ENCODE measurements at regions of chr12 and their contacts with region 1.

Region 1: GRCh38 chr12:104215638-104216297 is at the start of gene TXNRD1:
- DNase-seq: peak; percentile 83 to 90
- H3K4me3 ChIP-seq: peak within 1 kb of the TSS; percentile 70 to 82
- H3K27ac ChIP-seq: peak within 1 kb of the TSS; percentile 97
- H3K4me1 ChIP-seq: peaks cover 0 to 40% (median 16%) of the 10 kb centered on the region in 4 donors
- H3K27me3 ChIP-seq: no peaks in the 10 kb centered on the region
- CTCF ChIP-seq: peak; percentile 85 to 93

Region 2: DNA sequence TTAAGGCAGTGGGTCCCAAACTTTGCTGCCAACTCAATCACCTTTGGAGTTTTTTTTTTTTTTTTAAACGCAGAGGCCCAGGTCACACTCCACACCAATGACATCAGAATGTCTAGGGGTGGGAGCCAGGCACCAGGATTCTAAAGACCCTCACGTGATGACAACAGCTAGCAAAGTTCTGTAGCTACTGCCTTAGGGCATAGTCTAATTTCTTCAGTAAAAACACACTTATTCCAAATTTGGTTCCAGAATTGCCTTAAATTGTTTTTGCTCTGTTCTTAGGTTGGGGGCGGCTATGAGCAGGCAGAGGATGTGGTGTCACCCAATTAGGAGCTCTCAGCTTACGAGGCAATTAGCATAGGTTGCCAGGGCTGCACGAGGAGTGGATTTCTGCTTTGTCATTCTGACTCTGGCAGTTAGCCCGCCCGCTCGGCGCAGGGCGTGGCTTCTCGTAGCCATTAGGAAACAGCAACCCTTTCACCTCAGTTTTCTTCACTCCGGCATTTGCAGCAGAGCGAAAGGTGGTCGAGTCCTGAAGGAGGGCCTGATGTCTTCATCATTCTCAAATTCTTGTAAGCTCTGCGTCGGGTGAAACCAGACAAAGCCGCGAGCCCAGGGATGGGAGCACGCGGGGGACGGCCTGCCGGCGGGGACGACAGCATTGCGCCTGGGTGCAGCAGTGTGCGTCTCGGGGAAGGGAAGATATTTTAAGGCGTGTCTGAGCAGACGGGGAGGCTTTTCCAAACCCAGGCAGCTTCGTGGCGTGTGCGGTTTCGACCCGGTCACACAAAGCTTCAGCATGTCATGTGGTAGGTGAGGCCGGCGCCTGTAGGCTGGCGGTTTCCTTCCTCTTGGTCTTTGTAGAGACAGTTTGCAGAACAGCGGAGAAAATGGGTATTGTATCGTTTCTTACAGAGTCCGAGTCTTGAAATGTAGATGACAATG is 71.0 kb after region 1 on chr12:
- intact Hi-C with region 1: loop called (anchors 5 kb)
- DNase-seq: peak; percentile 95 to 97
- H3K4me3 ChIP-seq: peak overlapping the region; percentile 74 to 80
- H3K27ac ChIP-seq: peak overlapping the region; percentile 81 to 83
- H3K4me1 ChIP-seq: peaks cover 0 to 40% (median 19%) of the 10 kb centered on the region in 4 donors
- H3K27me3 ChIP-seq: no peaks in the 10 kb centered on the region
- CTCF ChIP-seq: peak in 1 of 2 experiments; percentile 6